Endothelial cell of umbilical vein (primary cell): ENCODE measurements at regions of chr1 and their contacts with region 1.

Region 1: GRCh38 chr1:47179017-47179987 is 10.5 kb downstream of the PDZK1IP1 start:
- DNase-seq: peak; percentile 91
- H3K4me3 ChIP-seq: peak overlapping the region in 2 of 3 experiments; percentile 22 to 30
- H3K27ac ChIP-seq: no peak overlapping the region
- H3K4me1 ChIP-seq: peaks cover 19% of the 10 kb centered on the region
- H3K27me3 ChIP-seq: no peaks in the 10 kb centered on the region
- CTCF ChIP-seq: peak; percentile 91 to 93
- POLR2A ChIP-seq: no peak

Region 2: GRCh38 chr1:47104816-47105215 is 74.5 kb before region 1 on chr1:
- CTCF ChIA-PET with region 1: interaction called, 3 read pairs
- POLR2A ChIA-PET with region 1: no interaction called
- dilution Hi-C with region 1: no loop called
- intact Hi-C with region 1: loop called (anchors 2 kb)
- DNase-seq: no peak
- H3K4me3 ChIP-seq: no peak overlapping the region
- H3K27ac ChIP-seq: no peak overlapping the region
- H3K4me1 ChIP-seq: peaks cover 10% of the 10 kb centered on the region
- H3K27me3 ChIP-seq: peaks cover 0 to 6% of the 10 kb centered on the region in 2 experiments
- CTCF ChIP-seq: no peak
- POLR2A ChIP-seq: no peak

Region 3: GRCh38 chr1:47137925-47138615 is 41.2 kb before region 1 on chr1:
- CTCF ChIA-PET with region 1: no interaction called
- POLR2A ChIA-PET with region 1: no interaction called
- dilution Hi-C with region 1: no loop called
- intact Hi-C with region 1: no loop called
- DNase-seq: no peak
- H3K4me3 ChIP-seq: no peak overlapping the region
- H3K27ac ChIP-seq: no peak overlapping the region
- H3K4me1 ChIP-seq: no peaks in the 10 kb centered on the region
- H3K27me3 ChIP-seq: no peaks in the 10 kb centered on the region
- CTCF ChIP-seq: no peak
- POLR2A ChIP-seq: no peak

Region 4: DNA sequence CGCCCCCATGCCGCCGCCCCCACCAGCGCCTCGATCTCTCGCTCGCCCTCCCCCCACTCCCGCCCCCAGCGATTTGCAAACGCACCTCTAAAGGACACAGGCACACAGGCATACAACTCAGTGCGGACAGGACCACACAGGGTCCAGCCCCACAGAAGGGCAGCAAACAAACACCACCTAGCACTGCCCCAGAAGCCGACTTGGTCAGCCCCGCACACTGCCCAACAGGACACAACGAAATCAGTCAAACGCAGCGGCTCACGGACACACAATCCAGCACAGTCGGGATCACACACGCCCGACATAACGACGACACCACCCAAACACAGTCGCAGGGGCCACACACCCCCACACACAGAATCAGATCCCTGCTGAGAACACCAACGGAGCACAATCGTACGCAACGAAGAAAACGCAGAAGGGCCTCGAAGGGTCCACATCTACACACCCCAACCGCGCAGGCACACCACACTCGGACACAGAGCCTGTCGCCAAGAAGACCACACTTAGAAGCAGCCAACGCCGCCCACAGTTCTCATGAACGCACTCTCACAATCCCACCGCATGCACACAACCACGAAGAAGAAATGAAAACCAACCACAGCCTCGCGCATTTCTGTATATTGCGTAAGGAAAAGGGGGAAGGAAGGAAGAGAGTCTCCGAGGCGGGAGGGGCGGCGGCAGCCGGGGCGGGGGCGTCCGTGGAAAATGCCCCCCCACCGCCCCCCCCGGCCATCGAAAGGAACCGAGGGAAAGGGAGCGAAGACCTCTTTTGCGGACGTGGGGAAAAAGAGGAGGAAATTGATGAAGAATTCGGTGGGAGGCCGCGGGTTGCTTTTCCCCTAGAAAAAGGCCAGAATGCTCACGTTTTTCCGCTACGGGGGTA is 52.2 kb after region 1 on chr1:
- CTCF ChIA-PET with region 1: interaction called, 44 read pairs
- POLR2A ChIA-PET with region 1: interaction called, 5 read pairs
- dilution Hi-C with region 1: no loop called
- intact Hi-C with region 1: no loop called
- DNase-seq: peak; percentile 75
- H3K4me3 ChIP-seq: peak overlapping the region; percentile 62 to 94 (median 81)
- H3K27ac ChIP-seq: peak overlapping the region; percentile 77
- H3K4me1 ChIP-seq: peaks cover 53% of the 10 kb centered on the region
- H3K27me3 ChIP-seq: no peaks in the 10 kb centered on the region
- CTCF ChIP-seq: no peak
- POLR2A ChIP-seq: peak; percentile 76

Region 5: GRCh38 chr1:47313915-47314664 is 134.8 kb after region 1 on chr1 and contains the start of gene STIL:
- CTCF ChIA-PET with region 1: interaction called, 19 read pairs
- POLR2A ChIA-PET with region 1: interaction called, 4 read pairs
- dilution Hi-C with region 1: no loop called
- intact Hi-C with region 1: loop called (anchors 1 kb)
- DNase-seq: peak; percentile 100
- H3K4me3 ChIP-seq: peak within 1 kb of the TSS; percentile 53 to 94 (median 92)
- H3K27ac ChIP-seq: peak within 1 kb of the TSS; percentile 81
- H3K4me1 ChIP-seq: peaks cover 10% of the 10 kb centered on the region
- H3K27me3 ChIP-seq: no peaks in the 10 kb centered on the region
- CTCF ChIP-seq: no peak
- POLR2A ChIP-seq: peak; percentile 62
- total RNA-seq, gene STIL: 24.7 and 28.1 TPM in 2 replicates

Region 6: GRCh38 chr1:47416319-47417169 is 237.2 kb after region 1 on chr1:
- CTCF ChIA-PET with region 1: interaction called, 11 read pairs
- POLR2A ChIA-PET with region 1: no interaction called
- dilution Hi-C with region 1: no loop called
- intact Hi-C with region 1: no loop called
- DNase-seq: peak; percentile 6
- H3K4me3 ChIP-seq: no peak overlapping the region
- H3K27ac ChIP-seq: no peak overlapping the region
- H3K4me1 ChIP-seq: no peaks in the 10 kb centered on the region
- H3K27me3 ChIP-seq: peaks cover 40 to 57% of the 10 kb centered on the region in 2 experiments
- CTCF ChIP-seq: no peak
- POLR2A ChIP-seq: no peak

Region 7: DNA sequence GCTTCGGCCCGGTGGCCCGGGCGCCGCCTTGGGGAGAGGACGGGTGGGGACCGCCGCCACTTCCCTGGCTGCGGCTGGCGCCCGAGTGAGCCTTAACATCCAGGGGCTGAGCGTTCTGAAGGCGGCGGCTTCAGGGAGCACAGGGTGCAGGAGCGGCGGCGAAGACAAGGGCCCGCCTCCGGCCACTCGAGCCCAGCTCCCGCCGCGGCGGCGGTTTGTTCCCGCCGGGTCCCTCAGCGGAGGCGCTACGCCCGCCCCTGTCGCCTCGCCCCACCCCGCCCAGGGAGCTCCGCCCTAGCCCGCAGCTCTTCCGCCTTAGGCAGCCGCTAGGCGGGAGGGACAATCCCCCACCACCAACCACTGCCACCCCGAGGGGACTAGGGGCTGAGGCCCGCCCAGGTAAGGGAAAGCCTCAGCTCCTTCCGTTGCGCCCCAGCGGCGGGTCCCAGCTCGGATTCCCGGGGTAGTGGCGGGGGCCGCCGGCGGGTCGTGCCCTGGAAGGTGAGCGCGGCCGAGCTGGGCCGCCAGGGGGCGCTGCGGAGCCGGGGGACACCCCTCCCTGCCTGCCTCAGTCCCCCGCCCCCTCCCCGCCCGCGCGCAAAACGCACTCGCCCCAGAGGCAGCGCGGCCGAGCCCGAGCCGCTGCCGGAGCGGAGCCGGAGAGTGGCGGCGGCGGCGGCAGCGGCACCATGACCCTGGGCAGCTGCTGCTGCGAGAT is 258.3 kb after region 1 on chr1 and contains the start of gene FOXD2:
- CTCF ChIA-PET with region 1: interaction called, 90 read pairs
- POLR2A ChIA-PET with region 1: no interaction called
- dilution Hi-C with region 1: no loop called
- intact Hi-C with region 1: loop called (anchors 1 kb)
- DNase-seq: peak; percentile 82
- H3K4me3 ChIP-seq: peak within 1 kb of the TSS; percentile 55 to 71 (median 57)
- H3K27ac ChIP-seq: no peak within 1 kb of the TSS
- H3K4me1 ChIP-seq: peaks cover 17% of the 10 kb centered on the region
- H3K27me3 ChIP-seq: peaks cover 42 to 60% of the 10 kb centered on the region in 2 experiments
- CTCF ChIP-seq: peak; percentile 76 to 84
- POLR2A ChIP-seq: peak; percentile 39
- total RNA-seq, gene FOXD2: 0.07 and 0.09 TPM in 2 replicates

Region 8: GRCh38 chr1:47725992-47726855 is 546.9 kb after region 1 on chr1:
- CTCF ChIA-PET with region 1: interaction called, 37 read pairs
- POLR2A ChIA-PET with region 1: no interaction called
- dilution Hi-C with region 1: no loop called
- intact Hi-C with region 1: no loop called
- DNase-seq: peak; percentile 74
- H3K4me3 ChIP-seq: no peak overlapping the region
- H3K27ac ChIP-seq: no peak overlapping the region
- H3K4me1 ChIP-seq: no peaks in the 10 kb centered on the region
- H3K27me3 ChIP-seq: peaks cover 34 to 37% of the 10 kb centered on the region in 2 experiments
- CTCF ChIP-seq: peak; percentile 83 to 95
- POLR2A ChIP-seq: no peak

Region 9: GRCh38 chr1:47948126-47948525 is 768.8 kb after region 1 on chr1:
- CTCF ChIA-PET with region 1: no interaction called
- POLR2A ChIA-PET with region 1: no interaction called
- dilution Hi-C with region 1: no loop called
- intact Hi-C with region 1: no loop called
- DNase-seq: no peak
- H3K4me3 ChIP-seq: no peak overlapping the region
- H3K27ac ChIP-seq: no peak overlapping the region
- H3K4me1 ChIP-seq: no peaks in the 10 kb centered on the region
- H3K27me3 ChIP-seq: peaks cover 0 to 1% of the 10 kb centered on the region in 2 experiments
- CTCF ChIP-seq: no peak
- POLR2A ChIP-seq: no peak

Region 10: DNA sequence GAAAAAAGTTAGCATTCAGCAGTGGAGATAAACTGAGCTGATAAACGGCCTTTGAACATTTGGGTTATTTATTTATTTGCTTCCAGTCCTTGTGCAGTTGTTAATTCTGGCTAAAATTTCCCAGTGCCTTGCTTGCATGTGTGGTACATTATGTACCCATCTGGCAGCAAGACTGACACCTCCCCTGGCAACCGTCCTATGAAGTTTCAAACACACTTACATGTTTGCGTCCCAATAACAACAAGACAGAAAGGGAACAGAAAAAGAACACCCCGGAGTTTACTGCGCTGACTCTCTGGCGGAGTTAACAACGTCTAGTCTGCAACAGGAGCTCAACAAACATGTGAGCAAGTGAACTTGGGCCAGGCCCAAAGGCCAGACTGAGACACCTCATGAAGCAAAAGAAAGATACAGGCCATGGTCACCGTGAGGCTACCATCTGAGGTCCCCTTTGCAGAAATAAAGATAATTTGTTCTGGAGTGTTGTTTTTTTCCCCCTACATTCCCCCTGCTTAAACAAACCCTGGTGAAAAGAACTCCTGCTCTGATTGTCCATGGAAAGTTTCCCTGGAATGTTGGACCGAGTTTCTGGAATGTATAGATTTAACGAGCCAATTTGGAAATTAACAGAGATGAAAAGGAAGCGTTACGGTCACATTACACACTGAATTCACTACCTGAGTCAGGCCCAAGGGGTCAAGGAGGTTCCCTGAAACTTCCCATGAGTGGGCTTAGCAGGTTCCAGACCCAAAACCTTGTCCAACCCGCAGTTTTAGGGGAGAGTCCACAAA is 784.5 kb after region 1 on chr1:
- CTCF ChIA-PET with region 1: no interaction called
- POLR2A ChIA-PET with region 1: no interaction called
- dilution Hi-C with region 1: no loop called
- intact Hi-C with region 1: no loop called
- DNase-seq: no peak
- H3K4me3 ChIP-seq: no peak overlapping the region
- H3K27ac ChIP-seq: no peak overlapping the region
- H3K4me1 ChIP-seq: no peaks in the 10 kb centered on the region
- H3K27me3 ChIP-seq: no peaks in the 10 kb centered on the region
- CTCF ChIP-seq: no peak
- POLR2A ChIP-seq: no peak